HepG2 (cell line): ENCODE measurements at regions of chr4 and their contacts with region 1.

Region 1: DNA sequence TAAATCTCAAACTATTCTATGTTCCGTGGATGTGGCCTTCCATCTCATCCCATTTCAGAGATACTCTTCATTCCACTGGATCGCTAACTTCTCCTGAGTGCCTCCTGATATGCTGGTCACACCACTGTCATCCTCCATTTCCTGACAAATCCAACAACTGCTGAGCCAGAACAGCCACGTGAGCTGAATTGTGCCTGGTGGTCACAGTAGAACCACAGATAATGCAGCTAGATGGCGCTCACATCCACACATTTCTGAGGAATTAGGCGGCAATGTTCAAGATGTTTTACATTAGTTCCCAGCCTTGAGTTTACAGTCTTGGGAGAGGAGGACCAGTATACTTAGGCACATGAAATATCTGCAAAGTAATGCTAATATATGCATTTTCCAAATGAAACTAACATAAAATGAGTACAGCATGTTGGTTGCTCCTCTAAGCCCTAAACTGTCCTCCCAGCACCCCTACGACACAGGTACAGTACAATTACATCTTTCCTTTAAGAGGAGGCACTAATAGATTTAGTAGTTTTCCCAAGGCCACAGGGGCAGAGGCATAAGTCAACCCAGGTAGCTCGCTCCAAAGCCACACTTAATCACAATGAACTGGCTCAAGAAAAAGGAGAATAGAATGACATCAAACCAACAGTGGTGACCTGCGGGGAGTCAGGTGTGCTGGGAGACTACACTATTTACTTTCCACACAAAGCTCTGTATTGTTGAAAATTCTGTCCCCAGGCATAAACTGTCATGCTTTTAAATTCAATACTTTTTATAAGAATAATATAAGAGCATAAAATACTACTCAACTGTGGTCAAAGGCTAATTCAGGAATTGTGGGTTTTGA is 134.2 kb downstream of the CHIC2 start:
- DNase-seq: peak; percentile 60
- ATAC-seq: peak; percentile 97
- H3K4me3 ChIP-seq: no peak overlapping the region
- H3K27ac ChIP-seq: no peak overlapping the region
- H3K4me1 ChIP-seq: peaks cover 14% of the 10 kb centered on the region
- H3K27me3 ChIP-seq: no peaks in the 10 kb centered on the region
- CTCF ChIP-seq: peak; percentile 92
- EP300 ChIP-seq: no peak
- POLR2A ChIP-seq: no peak
- RAD21 ChIP-seq: peak; percentile 56

Region 2: DNA sequence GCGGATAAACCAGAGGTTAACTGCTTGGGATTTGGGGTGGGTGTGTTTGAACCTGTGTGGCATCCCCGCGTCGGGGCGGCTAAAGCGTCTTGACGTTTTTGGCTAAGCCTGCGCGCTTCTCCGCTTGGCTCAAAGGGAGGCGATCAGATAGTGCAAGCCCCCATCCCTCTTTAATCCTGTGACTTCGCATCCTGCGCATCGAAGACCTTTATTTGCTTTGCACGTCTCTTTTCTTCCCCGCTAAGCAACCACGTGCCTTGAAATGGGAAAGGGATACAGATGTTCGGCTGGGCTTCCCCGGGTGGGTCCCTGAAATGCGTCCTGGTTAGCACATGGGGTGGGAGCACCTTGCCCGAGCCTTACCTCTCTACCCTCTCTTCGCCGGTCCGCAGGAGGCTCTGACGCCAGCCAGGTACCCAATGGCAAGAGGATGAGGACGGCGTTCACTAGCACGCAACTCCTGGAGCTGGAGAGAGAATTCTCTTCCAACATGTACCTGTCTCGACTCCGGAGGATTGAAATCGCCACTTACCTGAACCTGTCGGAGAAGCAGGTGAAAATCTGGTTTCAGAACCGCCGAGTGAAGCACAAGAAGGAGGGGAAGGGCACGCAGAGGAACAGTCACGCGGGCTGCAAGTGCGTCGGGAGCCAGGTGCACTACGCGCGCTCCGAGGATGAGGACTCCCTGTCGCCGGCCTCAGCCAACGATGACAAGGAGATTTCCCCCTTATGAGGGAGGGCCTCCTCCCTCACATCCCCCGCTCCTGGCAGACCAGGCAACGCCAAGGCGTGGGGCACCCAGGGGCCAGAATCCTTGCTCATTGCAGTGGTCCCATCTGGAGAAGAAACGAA is 171.2 kb after region 1 on chr4:
- CTCF ChIA-PET with region 1: no interaction called
- POLR2A ChIA-PET with region 1: no interaction called
- in situ Hi-C with region 1: no loop called
- intact Hi-C with region 1: loop called (anchors 2 kb)
- DNase-seq: no peak
- ATAC-seq: no peak
- H3K4me3 ChIP-seq: peak overlapping the region in 1 of 3 experiments; percentile 28; a peak in 1 of 6 replicates
- H3K27ac ChIP-seq: no peak overlapping the region
- H3K4me1 ChIP-seq: peaks cover 30% of the 10 kb centered on the region
- H3K27me3 ChIP-seq: peaks cover 8 to 86% of the 10 kb centered on the region in 2 experiments
- CTCF ChIP-seq: no peak
- EP300 ChIP-seq: no peak
- POLR2A ChIP-seq: no peak
- RAD21 ChIP-seq: no peak

Region 3: DNA sequence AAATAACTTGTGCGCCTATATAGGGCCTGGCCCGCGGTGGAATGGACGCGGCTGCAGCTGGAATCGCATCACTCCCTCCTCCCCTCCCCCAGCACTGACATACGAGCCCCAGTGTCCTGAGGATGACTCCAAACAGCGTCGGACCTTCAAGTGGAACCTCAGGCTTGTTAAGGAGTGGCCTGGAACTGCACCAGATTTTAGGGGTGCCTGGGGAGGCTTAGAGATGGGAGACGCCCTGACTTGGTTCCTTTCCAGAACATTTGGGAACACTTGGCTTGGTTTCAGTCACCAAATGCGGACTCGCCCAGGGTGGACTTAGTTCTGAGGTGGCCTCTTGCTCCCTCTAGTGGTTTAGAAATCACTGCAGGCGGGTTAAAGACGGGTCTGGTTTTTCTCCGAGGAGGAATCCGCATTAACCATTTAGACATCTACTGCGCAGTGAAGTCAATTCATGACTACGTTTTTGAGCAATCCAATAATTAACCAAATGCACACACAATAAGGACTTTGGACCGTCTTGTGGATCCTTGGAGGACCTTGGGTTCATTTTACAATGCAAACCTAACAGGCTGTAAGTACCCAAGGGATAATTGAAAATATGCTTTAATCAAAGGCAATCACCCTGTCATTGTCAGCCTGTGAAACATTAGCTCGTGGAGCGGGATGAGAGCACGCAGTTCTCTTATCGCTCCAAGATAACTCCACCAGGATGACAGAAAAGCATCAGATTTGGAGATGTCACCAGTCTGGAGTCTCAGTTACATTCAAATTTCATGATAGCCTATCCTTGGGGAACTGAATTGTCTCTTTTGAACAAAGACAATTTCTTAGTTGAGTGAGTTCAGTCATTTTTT is 287.7 kb after region 1 on chr4:
- CTCF ChIA-PET with region 1: interaction called, 22 read pairs
- POLR2A ChIA-PET with region 1: no interaction called
- in situ Hi-C with region 1: no loop called
- intact Hi-C with region 1: loop called (anchors 1 kb)
- DNase-seq: peak; percentile 52
- ATAC-seq: peak; percentile 97
- H3K4me3 ChIP-seq: peak overlapping the region in 1 of 3 experiments; percentile 59; a peak in 2 of 6 replicates
- H3K27ac ChIP-seq: no peak overlapping the region
- H3K4me1 ChIP-seq: no peaks in the 10 kb centered on the region
- H3K27me3 ChIP-seq: peaks cover 0 to 5% of the 10 kb centered on the region in 2 experiments; a peak in 3 of 5 replicates
- CTCF ChIP-seq: peak; percentile 92
- EP300 ChIP-seq: no peak
- POLR2A ChIP-seq: no peak
- RAD21 ChIP-seq: peak; percentile 83

Region 4: GRCh38 chr4:54913751-54914526 is 983.8 kb after region 1 on chr4:
- CTCF ChIA-PET with region 1: no interaction called
- POLR2A ChIA-PET with region 1: no interaction called
- in situ Hi-C with region 1: no loop called
- intact Hi-C with region 1: no loop called
- DNase-seq: peak; percentile 12
- ATAC-seq: peak; percentile 78
- H3K4me3 ChIP-seq: no peak overlapping the region
- H3K27ac ChIP-seq: no peak overlapping the region
- H3K4me1 ChIP-seq: peaks cover 9% of the 10 kb centered on the region; the same call in 1 of the 2 replicates
- H3K27me3 ChIP-seq: no peaks in the 10 kb centered on the region
- CTCF ChIP-seq: no peak
- EP300 ChIP-seq: no peak
- POLR2A ChIP-seq: no peak
- RAD21 ChIP-seq: no peak